BJ (cell line): ENCODE measurements at regions of chr22 and their contacts with region 1.

Region 1: GRCh38 chr22:38766076-38766777 is 10.4 kb upstream of the SUN2 start:
- DNase-seq: no peak
- H3K4me3 ChIP-seq: no peak overlapping the region
- H3K27me3 ChIP-seq: 0 out of 2 replicates have a peak, but pooled peaks cover 1% of the 10 kb centered on the region
- CTCF ChIP-seq: peak; percentile 96

Region 2: GRCh38 chr22:38755911-38756532 is 10.2 kb before region 1 on chr22 and contains the start of gene SUN2:
- CTCF ChIA-PET with region 1: interaction called, 39 read pairs
- POLR2A ChIA-PET with region 1: no interaction called
- DNase-seq: peak; percentile 30
- H3K4me3 ChIP-seq: peak within 1 kb of the TSS; percentile 66
- H3K27me3 ChIP-seq: no peaks in the 10 kb centered on the region
- CTCF ChIP-seq: no peak
- polyA plus RNA-seq, gene SUN2: 52.4 and 98.4 TPM in 2 replicates

Region 3: DNA sequence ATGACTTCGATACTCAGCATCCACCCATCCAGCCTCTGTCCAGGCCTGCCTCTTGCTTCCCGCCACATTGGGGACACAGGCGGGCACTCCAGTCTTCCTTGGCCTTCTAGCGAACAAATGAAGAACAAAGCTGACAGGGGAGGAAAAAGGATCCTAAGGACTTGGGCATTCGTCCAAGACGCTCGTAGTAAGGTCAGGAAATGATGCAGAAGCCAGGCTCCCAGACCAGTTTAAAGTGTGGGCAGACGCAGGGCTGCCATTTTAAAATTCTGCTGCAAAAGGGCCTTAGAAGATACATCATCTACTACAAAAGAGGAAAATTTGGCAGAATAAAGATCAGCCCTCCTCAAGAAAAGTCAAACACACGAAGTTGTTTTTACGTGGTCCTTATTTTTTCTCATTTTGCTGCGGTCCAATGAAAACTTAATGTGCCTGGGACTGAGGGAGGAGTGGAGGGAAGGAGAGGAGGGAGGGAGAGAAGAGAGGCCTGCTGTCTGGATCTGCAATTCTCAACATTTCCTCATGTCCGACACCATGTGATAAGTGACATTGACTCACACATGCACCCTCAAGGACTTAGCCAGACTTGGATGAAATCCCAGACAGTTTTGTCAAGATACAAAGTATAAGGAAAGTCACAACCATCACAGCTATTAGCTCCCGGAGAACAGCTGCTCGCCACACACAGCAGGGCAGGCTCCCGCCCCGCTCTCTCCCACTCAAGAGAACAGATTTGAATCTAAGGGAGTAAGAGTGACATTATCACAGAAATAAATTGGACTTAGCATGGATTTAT is 22.0 kb after region 1 on chr22:
- CTCF ChIA-PET with region 1: interaction called, 64 read pairs
- POLR2A ChIA-PET with region 1: no interaction called
- DNase-seq: peak; percentile 83
- H3K4me3 ChIP-seq: no peak overlapping the region
- H3K27me3 ChIP-seq: no peaks in the 10 kb centered on the region
- CTCF ChIP-seq: no peak

Region 4: DNA sequence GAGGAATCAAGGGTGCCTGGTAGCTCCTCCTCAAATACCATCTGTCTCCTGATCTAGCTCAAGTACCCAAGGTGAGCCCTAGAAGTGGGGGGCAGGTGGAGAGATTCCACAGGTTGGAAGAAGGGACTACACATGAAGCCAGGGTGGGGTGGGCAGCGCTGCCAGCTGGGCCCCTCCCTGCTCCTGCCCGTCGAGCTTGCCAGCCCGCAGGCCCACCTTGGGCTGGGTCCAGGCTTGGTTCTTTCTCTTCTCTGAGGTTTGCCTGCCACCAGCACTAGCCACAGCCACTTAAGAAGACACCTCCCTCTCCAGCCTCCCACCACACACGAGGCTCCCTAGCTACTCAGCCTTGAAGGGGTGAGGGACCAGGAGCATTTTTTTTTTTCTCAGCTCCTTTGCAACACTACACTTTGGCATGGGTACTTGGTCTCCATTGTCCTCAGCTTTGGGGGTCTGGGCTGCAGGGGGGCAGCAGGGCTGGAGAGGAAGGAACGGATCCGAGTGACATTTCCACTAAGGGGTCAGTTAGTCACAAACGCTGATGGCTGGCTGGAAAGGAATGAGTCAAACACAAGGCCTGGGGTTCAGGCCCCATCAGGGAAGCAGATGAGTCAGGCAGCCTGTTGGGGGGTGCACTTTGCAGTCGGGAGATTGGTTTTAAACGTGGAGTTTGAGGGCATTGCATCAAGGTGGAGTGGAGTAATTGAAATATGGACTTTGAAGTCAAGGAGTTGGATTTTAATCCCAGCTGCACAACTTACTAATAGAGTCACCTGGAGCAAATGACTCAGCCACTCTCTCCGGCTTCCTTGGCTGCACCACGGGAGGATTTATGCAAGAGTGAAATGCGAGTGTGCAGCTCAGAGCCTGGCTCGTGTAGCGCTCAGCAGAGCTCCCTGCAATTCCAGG is 85.0 kb after region 1 on chr22:
- CTCF ChIA-PET with region 1: interaction called, 74 read pairs
- POLR2A ChIA-PET with region 1: no interaction called
- DNase-seq: no peak
- H3K4me3 ChIP-seq: no peak overlapping the region
- H3K27me3 ChIP-seq: peaks cover 5% of the 10 kb centered on the region; the same call in 1 of the 2 replicates
- CTCF ChIP-seq: no peak

Region 5: DNA sequence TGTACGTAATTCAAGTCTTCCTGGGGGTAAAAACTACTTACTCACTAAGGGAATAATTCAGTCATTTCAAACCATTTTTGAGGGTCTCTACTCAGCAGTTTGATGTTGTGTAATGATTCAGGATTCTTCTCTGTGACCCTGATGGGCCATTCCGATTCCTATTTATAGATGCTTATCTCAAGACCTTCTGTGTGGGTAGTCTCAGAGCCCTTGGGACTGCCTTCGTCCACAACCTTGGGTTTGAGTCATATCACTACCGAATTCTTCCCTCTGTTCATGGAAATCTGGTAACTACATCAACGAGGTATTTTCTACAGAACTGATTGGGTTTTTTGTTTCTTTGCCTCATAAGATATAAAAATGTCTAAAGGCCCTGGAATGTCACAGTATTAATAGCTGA is 120.1 kb after region 1 on chr22:
- CTCF ChIA-PET with region 1: no interaction called
- POLR2A ChIA-PET with region 1: no interaction called
- DNase-seq: no peak
- H3K4me3 ChIP-seq: no peak overlapping the region
- H3K27me3 ChIP-seq: peaks cover 4% of the 10 kb centered on the region
- CTCF ChIP-seq: no peak

Region 6: DNA sequence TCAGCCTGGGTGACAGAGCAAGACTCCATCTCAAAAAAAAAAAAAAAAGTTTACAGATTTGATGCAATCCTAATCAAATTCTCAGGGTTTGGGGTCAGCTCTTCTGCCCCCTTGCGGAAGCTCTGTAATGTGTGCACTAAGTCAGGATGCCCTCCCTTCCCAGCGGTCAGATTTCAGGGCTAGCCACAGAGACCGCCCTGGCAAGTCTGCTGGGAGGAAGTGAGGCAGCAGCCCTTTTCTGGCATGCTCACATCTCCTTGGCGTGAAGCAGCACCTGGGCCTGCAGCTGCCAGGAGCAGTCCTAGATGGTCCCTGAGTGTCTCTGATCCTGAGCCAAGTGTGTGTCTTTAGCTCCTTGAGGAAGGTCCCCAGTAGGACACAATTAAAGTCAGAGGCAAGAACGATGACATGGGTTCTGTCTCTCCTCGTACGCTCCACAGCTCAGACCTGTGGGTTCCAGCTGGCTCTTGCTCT is 237.0 kb after region 1 on chr22:
- CTCF ChIA-PET with region 1: interaction called, 44 read pairs
- POLR2A ChIA-PET with region 1: no interaction called
- DNase-seq: peak; percentile 55
- H3K4me3 ChIP-seq: no peak overlapping the region
- H3K27me3 ChIP-seq: peaks cover 5% of the 10 kb centered on the region
- CTCF ChIP-seq: peak; percentile 76

Region 7: DNA sequence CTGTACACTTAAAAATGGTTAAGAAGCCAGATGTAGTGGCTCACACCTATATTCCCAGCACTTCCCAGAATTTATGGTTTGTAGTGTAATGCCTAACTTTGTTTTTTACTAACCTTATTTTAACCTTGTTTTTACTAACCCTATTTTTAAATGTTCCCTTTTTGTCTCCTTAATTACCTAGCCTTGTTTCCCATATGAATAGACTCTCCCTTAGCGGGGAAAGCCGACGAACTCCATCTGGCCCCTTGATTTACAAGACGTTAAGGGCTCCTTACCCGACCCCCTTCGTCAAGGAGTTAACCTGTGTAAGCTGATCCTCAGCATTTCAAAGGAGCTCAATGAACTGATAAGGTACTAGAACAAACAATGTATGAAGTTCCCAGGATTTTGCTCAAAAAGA is 347.9 kb after region 1 on chr22:
- CTCF ChIA-PET with region 1: interaction called, 13 read pairs
- POLR2A ChIA-PET with region 1: no interaction called
- DNase-seq: no peak
- H3K4me3 ChIP-seq: no peak overlapping the region
- H3K27me3 ChIP-seq: peaks cover 10% of the 10 kb centered on the region
- CTCF ChIP-seq: no peak